ENCODE measurements at regions of chr9 and their contacts with region 1.

Region 1: DNA sequence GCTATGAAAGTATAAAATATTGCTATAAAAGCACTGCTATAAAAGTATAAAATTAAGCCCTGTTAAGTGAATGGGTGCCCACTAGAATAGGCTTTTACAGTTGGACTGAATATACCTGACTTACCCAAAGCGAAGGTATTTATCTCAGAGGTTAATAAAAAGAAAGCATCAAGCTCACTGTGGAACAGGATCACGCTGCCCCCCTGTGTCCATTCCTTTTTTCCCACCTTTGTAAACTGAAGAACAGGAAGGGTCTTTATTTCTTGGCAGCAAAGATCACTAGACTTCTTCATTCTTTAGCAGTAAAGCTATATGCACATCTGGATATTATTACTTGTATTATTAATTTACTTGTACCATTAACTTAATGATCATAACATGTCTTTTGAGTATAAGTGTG is 22.1 kb upstream of the PLPP6 start:
- DNase-seq: peak; percentile 77
- ATAC-seq: peak; percentile 39
- H3K4me3 Mint-ChIP-seq: no peak overlapping the region
- H3K27ac Mint-ChIP-seq: no peak overlapping the region
- H3K4me1 Mint-ChIP-seq: peaks cover 4% of the 10 kb centered on the region
- H3K27me3 Mint-ChIP-seq: no peaks in the 10 kb centered on the region
- CTCF ChIP-seq: peak; percentile 53

Region 2: DNA sequence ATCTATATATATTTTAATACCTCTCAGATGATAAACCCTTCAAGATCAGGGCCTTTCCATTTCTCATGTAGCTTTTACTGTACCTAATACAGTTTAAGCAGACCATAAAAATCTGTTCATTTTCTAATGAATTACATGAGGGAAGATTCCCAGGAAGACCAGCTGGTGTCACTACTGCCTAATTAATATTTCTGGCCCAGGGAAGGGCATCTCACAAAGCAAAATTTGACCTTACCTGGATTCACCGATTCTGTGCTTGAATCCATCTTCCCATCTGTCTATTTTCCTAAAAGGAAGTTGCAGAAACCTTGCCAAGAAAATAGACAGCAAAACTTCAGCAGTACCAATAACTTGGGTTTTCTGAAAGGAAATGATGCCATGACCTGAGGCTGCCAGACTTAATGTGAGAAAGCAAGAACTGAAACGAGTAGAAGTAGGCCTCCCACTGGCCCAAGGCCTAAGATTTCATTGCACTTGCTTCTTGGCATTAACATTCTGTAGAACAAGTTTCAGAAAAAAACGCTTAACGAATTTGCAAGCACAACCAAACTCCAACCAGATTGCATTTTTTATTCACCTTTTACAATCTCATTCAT is 257.2 kb before region 1 on chr9:
- CTCF ChIA-PET with region 1: interaction called, 21 read pairs
- POLR2A ChIA-PET with region 1: no interaction called
- intact Hi-C with region 1: loop called (anchors 5 kb)
- DNase-seq: no peak
- ATAC-seq: no peak
- H3K4me3 Mint-ChIP-seq: no peak overlapping the region
- H3K27ac Mint-ChIP-seq: no peak overlapping the region
- H3K4me1 Mint-ChIP-seq: no peaks in the 10 kb centered on the region
- H3K27me3 Mint-ChIP-seq: peaks cover 11% of the 10 kb centered on the region
- CTCF ChIP-seq: peak; percentile 54

Region 3: DNA sequence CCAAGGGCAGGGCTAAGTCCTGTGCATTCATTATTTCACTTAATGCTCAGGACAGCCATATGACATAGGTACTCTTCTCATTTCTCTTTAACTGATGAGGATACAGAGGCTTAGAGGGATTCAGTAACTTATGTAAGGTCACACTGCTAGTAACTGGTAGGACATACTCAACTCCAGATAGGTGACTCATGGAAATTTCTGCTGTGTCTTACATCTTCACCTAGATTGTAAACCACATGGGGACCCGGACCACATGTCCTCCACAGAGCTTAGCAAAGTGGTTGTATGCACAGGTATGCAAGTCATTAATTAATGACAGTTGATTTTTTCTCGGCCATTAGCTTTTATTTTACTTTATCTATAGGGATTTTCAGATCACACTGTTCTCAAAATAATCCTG is 120.4 kb before region 1 on chr9:
- CTCF ChIA-PET with region 1: no interaction called
- POLR2A ChIA-PET with region 1: no interaction called
- intact Hi-C with region 1: no loop called
- DNase-seq: peak; percentile 63
- ATAC-seq: peak; percentile 89
- H3K4me3 Mint-ChIP-seq: no peak overlapping the region
- H3K27ac Mint-ChIP-seq: no peak overlapping the region
- H3K4me1 Mint-ChIP-seq: peaks cover 17% of the 10 kb centered on the region
- H3K27me3 Mint-ChIP-seq: no peaks in the 10 kb centered on the region
- CTCF ChIP-seq: no peak

Region 4: GRCh38 chr9:4574657-4575243 is 65.3 kb before region 1 on chr9:
- CTCF ChIA-PET with region 1: interaction called, 13 read pairs
- POLR2A ChIA-PET with region 1: no interaction called
- intact Hi-C with region 1: no loop called
- DNase-seq: peak; percentile 47
- ATAC-seq: peak; percentile 67
- H3K4me3 Mint-ChIP-seq: no peak overlapping the region
- H3K27ac Mint-ChIP-seq: peak overlapping the region; percentile 33
- H3K4me1 Mint-ChIP-seq: peaks cover 22% of the 10 kb centered on the region
- H3K27me3 Mint-ChIP-seq: no peaks in the 10 kb centered on the region
- CTCF ChIP-seq: no peak

Region 5: DNA sequence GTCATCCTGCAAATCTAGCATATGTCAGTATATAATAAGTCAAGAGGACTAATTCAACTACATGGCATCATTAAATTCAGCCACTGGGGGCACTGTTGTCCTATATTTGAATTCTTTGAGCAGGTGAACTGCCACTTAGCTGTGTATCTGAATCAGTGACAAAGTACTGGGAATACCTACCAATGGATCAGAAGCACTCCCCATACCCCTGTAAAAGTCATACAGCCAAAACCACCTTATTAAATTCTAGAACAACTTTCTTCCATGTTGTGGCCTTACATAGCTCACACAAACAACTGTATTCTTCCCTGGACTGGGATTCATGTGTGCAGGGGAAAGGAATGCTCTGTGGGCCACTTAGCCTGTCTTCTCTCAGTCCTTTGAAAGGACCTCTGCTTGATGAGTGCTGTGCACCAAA is 35.3 kb before region 1 on chr9:
- CTCF ChIA-PET with region 1: interaction called, 12 read pairs
- POLR2A ChIA-PET with region 1: no interaction called
- intact Hi-C with region 1: no loop called
- DNase-seq: peak; percentile 85
- ATAC-seq: peak; percentile 93
- H3K4me3 Mint-ChIP-seq: no peak overlapping the region
- H3K27ac Mint-ChIP-seq: no peak overlapping the region
- H3K4me1 Mint-ChIP-seq: peaks cover 20% of the 10 kb centered on the region
- H3K27me3 Mint-ChIP-seq: no peaks in the 10 kb centered on the region
- CTCF ChIP-seq: peak; percentile 76

Measured in activated CD8-positive, alpha-beta T cell treated with anti-CD3 and anti-CD28 coated beads for 36 hours (primary cell).